AG04450 (cell line): ENCODE measurements at regions of chr3 and their contacts with region 1.

Region 1: GRCh38 chr3:78645628-78646310 is 1122.0 kb downstream of the ROBO1 start:
- DNase-seq: peak; percentile 55
- H3K4me3 ChIP-seq: no peak overlapping the region
- H3K27ac ChIP-seq: no peak overlapping the region
- H3K27me3 ChIP-seq: no peaks in the 10 kb centered on the region
- CTCF ChIP-seq: peak; percentile 89

Region 2: GRCh38 chr3:78614486-78614885 is 31.3 kb before region 1 on chr3:
- CTCF ChIA-PET with region 1: interaction called, 13 read pairs
- POLR2A ChIA-PET with region 1: no interaction called
- DNase-seq: no peak
- H3K4me3 ChIP-seq: no peak overlapping the region
- H3K27ac ChIP-seq: no peak overlapping the region
- H3K27me3 ChIP-seq: no peaks in the 10 kb centered on the region
- CTCF ChIP-seq: no peak

Region 3: DNA sequence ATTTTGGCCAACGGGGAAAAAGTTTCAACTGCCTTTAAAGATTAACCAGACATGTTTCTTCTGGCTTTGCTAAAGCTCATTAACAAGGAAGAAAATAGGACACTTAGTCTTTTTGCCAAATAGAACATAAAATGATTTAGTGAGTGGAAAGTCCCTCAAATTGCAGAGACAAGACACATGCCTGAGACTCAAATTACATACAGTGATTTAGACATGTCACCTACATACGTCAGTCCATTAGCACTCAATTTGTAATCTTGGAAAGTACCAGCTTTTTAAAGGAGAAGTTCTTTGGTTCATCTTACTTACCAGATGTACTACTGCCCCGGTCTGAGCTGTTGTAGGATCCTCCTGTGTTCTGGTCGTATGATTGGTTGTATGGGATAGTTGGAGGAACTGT is 12.1 kb before region 1 on chr3:
- CTCF ChIA-PET with region 1: interaction called, 15 read pairs
- POLR2A ChIA-PET with region 1: no interaction called
- DNase-seq: no peak
- H3K4me3 ChIP-seq: no peak overlapping the region
- H3K27ac ChIP-seq: no peak overlapping the region
- H3K27me3 ChIP-seq: no peaks in the 10 kb centered on the region
- CTCF ChIP-seq: no peak

Region 4: GRCh38 chr3:78659386-78659987 is 13.7 kb after region 1 on chr3:
- CTCF ChIA-PET with region 1: interaction called, 10 read pairs
- POLR2A ChIA-PET with region 1: no interaction called
- DNase-seq: peak; percentile 23
- H3K4me3 ChIP-seq: no peak overlapping the region
- H3K27ac ChIP-seq: no peak overlapping the region
- H3K27me3 ChIP-seq: no peaks in the 10 kb centered on the region
- CTCF ChIP-seq: peak; percentile 60

Region 5: GRCh38 chr3:78846718-78847117 is 200.9 kb after region 1 on chr3:
- CTCF ChIA-PET with region 1: no interaction called
- POLR2A ChIA-PET with region 1: no interaction called
- DNase-seq: peak; percentile 70
- H3K4me3 ChIP-seq: no peak overlapping the region
- H3K27ac ChIP-seq: no peak overlapping the region
- H3K27me3 ChIP-seq: no peaks in the 10 kb centered on the region
- CTCF ChIP-seq: no peak

Region 6: DNA sequence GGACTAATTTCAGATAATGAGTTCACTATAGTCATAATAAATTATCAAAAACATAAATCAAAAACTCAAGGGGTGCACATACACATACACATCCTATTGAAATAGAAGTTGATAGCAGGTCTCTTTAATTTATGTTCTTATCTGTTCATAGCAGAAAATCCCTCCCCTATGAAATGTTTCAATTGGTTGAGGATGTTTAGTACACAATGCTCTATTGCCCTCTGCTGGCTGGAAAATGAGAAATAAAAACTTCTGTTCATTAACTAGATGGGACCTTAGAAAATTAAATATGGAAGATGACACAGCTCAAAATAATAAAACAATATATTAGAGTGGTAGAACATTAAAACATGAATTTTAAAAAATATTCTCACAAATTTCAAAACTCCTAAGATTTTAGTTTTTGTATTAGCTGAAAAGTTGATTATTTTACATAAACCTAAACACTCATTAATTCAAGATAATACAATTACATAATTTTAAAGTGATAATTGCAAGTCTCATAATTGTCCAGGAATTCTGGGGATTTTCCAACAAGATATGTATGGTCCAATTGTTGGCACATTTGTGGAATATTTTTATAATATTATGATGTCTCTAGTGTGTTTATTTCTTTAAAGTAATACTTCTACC is 387.0 kb after region 1 on chr3:
- CTCF ChIA-PET with region 1: interaction called, 31 read pairs
- POLR2A ChIA-PET with region 1: no interaction called
- DNase-seq: peak; percentile 13
- H3K4me3 ChIP-seq: no peak overlapping the region
- H3K27ac ChIP-seq: no peak overlapping the region
- H3K27me3 ChIP-seq: no peaks in the 10 kb centered on the region
- CTCF ChIP-seq: peak; percentile 68